ENCODE measurements at regions of chr3 and their contacts with region 1.

Region 1: DNA sequence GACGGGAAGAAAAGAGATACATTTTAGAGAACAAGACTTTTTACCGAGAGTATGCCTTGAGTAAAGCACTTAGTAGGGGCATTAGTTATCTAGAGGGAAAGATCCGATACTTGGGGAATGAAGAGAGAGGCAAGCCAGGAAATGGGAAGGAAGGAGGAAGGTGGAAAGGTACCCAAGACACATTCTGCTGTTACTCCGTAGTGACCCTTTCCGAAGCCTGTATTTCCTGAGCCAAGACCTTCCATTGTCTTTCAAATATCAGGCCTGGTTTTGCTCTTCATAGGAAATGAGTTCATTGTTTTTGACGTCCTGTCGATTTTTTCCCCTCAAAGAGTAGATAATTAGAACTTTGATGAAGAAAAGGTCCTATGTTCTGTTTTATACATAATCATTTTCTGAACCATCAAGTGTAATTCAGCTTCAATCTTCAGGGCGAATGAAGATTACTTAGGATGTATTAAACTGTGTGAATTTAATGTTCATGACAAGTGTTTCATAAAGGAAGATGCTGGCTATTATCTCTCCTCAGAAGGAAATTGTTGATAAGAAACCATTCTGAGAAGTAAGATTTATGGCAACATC is 95.7 kb downstream of the PPM1L start:
- DNase-seq: no peak
- ATAC-seq: no peak
- H3K4me3 ChIP-seq: no peak overlapping the region
- H3K27ac ChIP-seq: no peak overlapping the region
- H3K4me1 ChIP-seq: peaks cover 15% of the 10 kb centered on the region
- H3K27me3 ChIP-seq: no peaks in the 10 kb centered on the region
- CTCF ChIP-seq: no peak

Region 2: GRCh38 chr3:160810362-160811236 is 41.1 kb before region 1 on chr3:
- intact Hi-C with region 1: loop called in 1 of 2 experiments (anchors 5 kb)
- DNase-seq: peak; percentile 23 to 69
- ATAC-seq: peak; percentile 65 to 74 (median 71)
- H3K4me3 ChIP-seq: peak overlapping the region; percentile 9
- H3K27ac ChIP-seq: peak overlapping the region; percentile 92
- H3K4me1 ChIP-seq: peaks cover 82% of the 10 kb centered on the region
- H3K27me3 ChIP-seq: no peaks in the 10 kb centered on the region
- CTCF ChIP-seq: no peak